ENCODE measurements at regions of chr3 and their contacts with region 1.

Region 1: DNA sequence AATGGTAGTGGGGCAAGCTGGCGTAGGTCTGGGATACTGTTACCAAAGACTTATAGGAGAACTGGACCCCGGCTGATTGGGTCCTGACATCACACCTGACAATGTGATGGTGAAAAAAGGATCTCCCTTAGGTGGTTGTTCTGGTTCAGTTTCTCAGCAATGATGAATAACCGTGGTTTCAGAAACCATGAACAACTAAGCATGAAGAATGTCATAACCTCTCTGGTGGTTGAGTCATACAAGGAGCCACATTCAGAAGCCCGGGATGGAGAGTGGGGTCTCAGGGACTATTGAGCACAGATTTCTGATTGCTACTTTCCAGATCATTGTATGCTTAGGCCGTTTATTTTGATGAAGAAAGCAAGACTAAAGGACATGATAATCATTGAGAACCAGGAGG is 17.4 kb downstream of the GPR160 start:
- DNase-seq: no peak
- ATAC-seq: peak; percentile 75
- H3K4me3 Mint-ChIP-seq: peak overlapping the region; percentile 77
- H3K27ac Mint-ChIP-seq: peak overlapping the region; percentile 87
- H3K4me1 Mint-ChIP-seq: peaks cover 57% of the 10 kb centered on the region
- H3K27me3 Mint-ChIP-seq: no peaks in the 10 kb centered on the region
- CTCF ChIP-seq: no peak

Region 2: DNA sequence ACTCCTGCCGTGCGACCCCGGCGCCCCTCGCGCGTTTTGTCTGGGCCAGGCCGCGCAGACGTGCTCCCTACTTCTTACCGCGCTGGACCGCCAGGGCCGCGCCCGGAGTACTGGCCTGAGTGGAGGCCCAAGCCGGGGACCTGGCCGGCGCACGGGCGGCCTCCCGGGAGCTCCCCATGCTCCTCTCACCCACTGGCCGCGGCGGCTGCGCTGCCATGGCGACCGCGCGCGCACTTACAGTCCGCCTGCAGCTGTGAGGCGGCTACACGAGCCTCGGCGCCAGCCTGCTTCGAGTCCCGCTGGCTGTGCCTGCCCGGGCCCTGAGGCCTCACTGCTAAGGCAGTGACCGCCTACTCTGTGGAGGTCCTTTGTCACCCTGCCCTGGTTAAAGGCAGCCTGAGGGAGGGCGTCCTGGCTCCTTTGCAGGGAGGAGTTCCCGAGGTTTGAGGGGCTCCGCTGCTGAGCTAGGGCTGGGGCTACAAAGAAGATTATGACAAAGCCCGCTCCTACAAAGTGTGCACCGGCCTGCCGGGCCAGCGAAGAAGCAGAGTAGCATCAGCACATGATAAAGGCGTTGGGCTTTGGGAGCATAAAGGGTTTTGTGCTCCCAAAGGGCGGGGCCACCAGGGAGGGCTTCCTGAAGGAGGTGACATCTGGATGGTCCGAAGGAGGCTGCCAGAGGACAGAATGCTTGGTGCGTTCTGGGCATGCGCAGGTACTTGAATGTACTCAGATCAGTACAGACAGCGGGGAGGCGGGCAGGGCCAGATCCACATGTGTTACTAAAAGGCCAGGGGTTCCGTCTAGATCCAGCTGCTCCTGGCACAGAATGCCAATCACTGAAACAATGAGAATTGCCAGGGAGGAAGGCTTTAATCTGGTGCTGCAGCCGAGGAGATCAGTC is 242.6 kb before region 1 on chr3 and contains the starts of genes LRRC34 and LRRIQ4:
- CTCF ChIA-PET with region 1: interaction called, 4 read pairs
- POLR2A ChIA-PET with region 1: interaction called, 5 read pairs
- intact Hi-C with region 1: loop called (anchors 2 kb)
- DNase-seq: peak; percentile 70
- ATAC-seq: peak; percentile 56
- H3K4me3 Mint-ChIP-seq: peak within 1 kb of the TSS; percentile 85
- H3K27ac Mint-ChIP-seq: peak within 1 kb of the TSS; percentile 97
- H3K4me1 Mint-ChIP-seq: peaks cover 37% of the 10 kb centered on the region
- H3K27me3 Mint-ChIP-seq: no peaks in the 10 kb centered on the region
- CTCF ChIP-seq: no peak
- total RNA-seq, gene LRRC34: 4.2 and 5.7 TPM in 2 replicates
- total RNA-seq, gene LRRIQ4: 0.29 and 0.40 TPM in 2 replicates

Region 3: DNA sequence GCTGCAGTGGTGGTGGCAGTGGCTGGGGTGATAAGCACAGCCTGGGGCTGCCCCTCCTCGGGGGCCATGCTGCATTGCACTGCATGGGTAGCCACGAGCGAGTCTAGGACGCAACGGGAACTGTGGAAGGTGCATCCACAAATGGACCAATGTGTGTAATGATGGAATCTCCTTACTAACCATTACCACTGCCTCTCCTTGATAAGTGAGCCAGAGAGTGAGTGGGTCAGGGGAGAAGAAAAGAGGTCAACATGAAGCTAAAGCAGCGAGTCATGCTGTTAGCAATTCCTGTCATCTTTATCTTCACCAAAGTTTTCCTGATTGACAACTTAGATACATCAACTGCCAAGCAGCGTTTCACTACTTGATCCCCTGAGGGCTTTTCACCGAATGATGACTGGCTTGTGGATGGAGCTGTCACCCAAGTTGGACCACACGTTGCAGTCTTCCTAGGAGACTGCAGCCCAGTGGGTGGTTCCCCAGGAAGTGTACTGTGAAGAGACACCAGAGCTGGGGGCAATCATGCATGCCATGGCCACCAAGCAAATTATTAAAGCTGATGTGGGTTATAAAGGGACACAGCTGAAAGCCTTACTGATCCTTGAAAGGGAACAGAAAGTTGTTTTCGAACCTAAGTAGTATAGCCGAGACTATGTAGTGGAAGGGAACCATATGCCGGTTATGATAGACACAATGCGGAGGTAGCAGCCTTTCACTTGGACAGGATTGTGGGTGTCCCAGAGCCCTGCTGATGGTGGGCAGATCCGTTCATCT is 123.3 kb before region 1 on chr3:
- CTCF ChIA-PET with region 1: interaction called, 4 read pairs
- POLR2A ChIA-PET with region 1: interaction called, 13 read pairs
- intact Hi-C with region 1: loop called (anchors 1 kb)
- DNase-seq: peak; percentile 55
- ATAC-seq: peak; percentile 88
- H3K4me3 Mint-ChIP-seq: peak overlapping the region; percentile 70
- H3K27ac Mint-ChIP-seq: peak overlapping the region; percentile 95
- H3K4me1 Mint-ChIP-seq: peaks cover 52% of the 10 kb centered on the region
- H3K27me3 Mint-ChIP-seq: no peaks in the 10 kb centered on the region
- CTCF ChIP-seq: no peak

Region 4: GRCh38 chr3:169966428-169966950 is 88.7 kb before region 1 on chr3 and contains the start of gene SEC62:
- CTCF ChIA-PET with region 1: interaction called, 4 read pairs
- POLR2A ChIA-PET with region 1: interaction called, 14 read pairs
- intact Hi-C with region 1: no loop called
- DNase-seq: peak; percentile 94
- ATAC-seq: peak; percentile 86
- H3K4me3 Mint-ChIP-seq: peak within 1 kb of the TSS; percentile 99
- H3K27ac Mint-ChIP-seq: peak within 1 kb of the TSS; percentile 99
- H3K4me1 Mint-ChIP-seq: peaks cover 87% of the 10 kb centered on the region
- H3K27me3 Mint-ChIP-seq: no peaks in the 10 kb centered on the region
- CTCF ChIP-seq: no peak
- total RNA-seq, gene SEC62: 140 and 165 TPM in 2 replicates

Region 5: DNA sequence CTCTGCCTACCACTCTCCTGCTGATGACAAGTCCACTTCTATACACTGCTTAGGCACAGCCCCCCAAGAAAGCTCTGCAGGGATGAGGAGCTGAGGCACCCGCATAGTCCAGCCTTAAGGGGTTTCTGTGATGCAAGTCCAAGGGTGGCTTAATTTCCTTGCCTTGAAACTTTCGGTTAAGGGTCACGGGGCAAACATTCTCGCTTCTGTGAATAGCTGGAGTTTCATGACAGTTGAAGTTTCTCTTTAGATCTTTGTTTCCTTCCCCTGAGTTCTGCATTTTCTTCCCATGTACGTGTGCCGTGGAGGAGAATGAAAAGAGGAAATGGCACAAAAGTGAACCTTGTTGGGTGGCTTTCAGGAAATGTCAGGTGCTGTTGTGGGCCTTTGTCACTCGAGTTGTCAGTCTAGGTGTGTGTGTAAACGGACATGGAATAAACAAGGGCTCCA is 10.4 kb before region 1 on chr3:
- CTCF ChIA-PET with region 1: interaction called, 9 read pairs
- POLR2A ChIA-PET with region 1: interaction called, 121 read pairs
- intact Hi-C with region 1: loop called (anchors 1 kb)
- DNase-seq: peak; percentile 45
- ATAC-seq: peak; percentile 77
- H3K4me3 Mint-ChIP-seq: peak overlapping the region; percentile 64
- H3K27ac Mint-ChIP-seq: peak overlapping the region; percentile 87
- H3K4me1 Mint-ChIP-seq: peaks cover 65% of the 10 kb centered on the region
- H3K27me3 Mint-ChIP-seq: no peaks in the 10 kb centered on the region
- CTCF ChIP-seq: no peak

Region 6: GRCh38 chr3:170869645-170870593 is 814.7 kb after region 1 on chr3 and contains the start of gene RPL22L1:
- CTCF ChIA-PET with region 1: no interaction called
- POLR2A ChIA-PET with region 1: no interaction called
- intact Hi-C with region 1: loop called (anchors 5 kb)
- DNase-seq: peak; percentile 89
- ATAC-seq: peak; percentile 86
- H3K4me3 Mint-ChIP-seq: peak within 1 kb of the TSS; percentile 95
- H3K27ac Mint-ChIP-seq: peak within 1 kb of the TSS; percentile 97
- H3K4me1 Mint-ChIP-seq: peaks cover 34% of the 10 kb centered on the region
- H3K27me3 Mint-ChIP-seq: no peaks in the 10 kb centered on the region
- CTCF ChIP-seq: no peak
- total RNA-seq, gene RPL22L1: 109 and 124 TPM in 2 replicates

Measured in activated B cell treated with CpG ODN at 0.5 μM for 24 hours (primary cell).